ENCODE measurements at regions of chr20 and their contacts with region 1.

Region 1: GRCh38 chr20:49610701-49611538 is 43.0 kb upstream of the PTGIS start:
- DNase-seq: peak; percentile 62 to 94 (median 86)
- ATAC-seq: peak; percentile 80 to 93 (median 88)
- H3K4me3 ChIP-seq: peak overlapping the region in 1 of 4 donors; percentile 21
- H3K27ac ChIP-seq: peak overlapping the region in 3 of 4 donors; percentile 8 to 41 (median 30)
- H3K4me1 ChIP-seq: peaks cover 0 to 7% (median 0%) of the 10 kb centered on the region in 3 donors
- H3K27me3 ChIP-seq: no peaks in the 10 kb centered on the region
- CTCF ChIP-seq: peak; percentile 98 to 99 (median 98)

Region 2: GRCh38 chr20:49338061-49338460 is 272.9 kb before region 1 on chr20:
- intact Hi-C with region 1: loop called in 1 of 3 experiments (anchors 10 kb)
- DNase-seq: no peak
- ATAC-seq: no peak
- H3K4me3 ChIP-seq: no peak overlapping the region
- H3K27ac ChIP-seq: no peak overlapping the region
- H3K4me1 ChIP-seq: no peaks in the 10 kb centered on the region
- H3K27me3 ChIP-seq: peaks cover 0 to 3% (median 0%) of the 10 kb centered on the region in 4 donors
- CTCF ChIP-seq: no peak

Region 3: DNA sequence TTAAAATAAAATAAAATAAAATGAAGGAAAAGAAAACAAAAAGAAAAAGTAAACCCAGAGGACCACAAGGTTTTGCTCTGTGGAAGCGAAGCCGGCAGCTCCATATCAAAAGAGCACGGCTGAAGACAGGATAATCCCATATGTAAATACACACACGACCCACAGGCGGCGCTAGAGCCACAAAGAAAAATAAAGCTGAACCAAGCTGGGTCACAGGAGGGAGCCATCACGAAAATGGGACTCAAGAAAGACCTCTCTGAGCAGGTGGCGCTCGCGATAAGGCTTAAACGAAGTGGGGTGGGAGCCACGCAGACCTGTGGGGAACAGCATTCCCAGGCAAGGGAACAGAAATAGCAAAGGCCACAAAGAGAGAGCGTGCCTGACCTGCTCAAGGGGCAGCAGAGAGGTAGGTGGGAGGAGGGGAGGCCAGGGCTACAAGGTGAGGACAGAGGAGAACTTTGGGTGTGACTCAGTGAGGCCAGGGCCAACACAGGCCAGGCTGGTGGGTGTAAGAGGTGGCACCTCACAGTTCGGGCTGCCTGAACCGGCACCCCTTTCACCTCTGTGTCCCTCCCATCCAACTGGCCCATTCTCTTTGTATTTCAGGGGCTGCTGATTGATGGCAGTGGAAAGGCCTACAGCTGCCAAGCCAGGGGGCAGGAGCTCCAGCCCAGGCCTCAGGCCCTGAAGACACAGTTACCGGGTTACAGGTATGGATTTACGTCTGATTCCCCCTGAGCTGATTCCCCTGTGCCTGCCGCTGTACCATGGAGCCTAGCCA is 69.0 kb before region 1 on chr20:
- intact Hi-C with region 1: loop called in 2 of 3 experiments (anchors 2 to 5 kb)
- DNase-seq: peak in 5 of 6 donors; percentile 22 to 69 (median 52)
- ATAC-seq: peak; percentile 46 to 87 (median 78)
- H3K4me3 ChIP-seq: no peak overlapping the region
- H3K27ac ChIP-seq: no peak overlapping the region
- H3K4me1 ChIP-seq: no peaks in the 10 kb centered on the region
- H3K27me3 ChIP-seq: no peaks in the 10 kb centered on the region
- CTCF ChIP-seq: peak; percentile 43 to 61 (median 53)

Region 4: DNA sequence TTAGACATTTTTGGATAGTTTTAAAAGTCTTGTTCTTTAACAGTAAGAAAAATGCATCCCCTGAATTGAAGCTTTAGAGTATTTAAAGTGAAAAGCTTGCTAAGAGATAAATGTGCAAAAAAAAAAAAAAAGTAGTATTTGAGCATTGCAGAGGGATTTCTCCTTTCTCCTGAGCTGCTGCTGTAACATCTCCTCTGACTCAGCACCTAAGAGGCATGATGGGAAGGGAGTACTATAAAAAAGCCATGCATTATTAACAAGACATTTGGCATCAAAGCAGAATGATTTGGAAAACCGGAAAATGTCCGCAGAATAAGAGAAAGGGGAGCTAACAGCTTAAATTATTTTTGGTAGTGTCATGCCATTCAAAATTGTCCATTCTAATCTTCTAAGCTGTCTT is 74.9 kb after region 1 on chr20:
- intact Hi-C with region 1: no loop called
- DNase-seq: no peak
- ATAC-seq: peak in 2 of 4 donors; percentile 24 to 43
- H3K4me3 ChIP-seq: no peak overlapping the region
- H3K27ac ChIP-seq: peak overlapping the region in 1 of 4 donors; percentile 1
- H3K4me1 ChIP-seq: peaks cover 28 to 73% (median 31%) of the 10 kb centered on the region in 3 donors
- H3K27me3 ChIP-seq: no peaks in the 10 kb centered on the region
- CTCF ChIP-seq: no peak

Region 5: GRCh38 chr20:49843770-49844380 is 233.0 kb after region 1 on chr20:
- intact Hi-C with region 1: loop called in 2 of 3 experiments (anchors 5 kb)
- DNase-seq: no peak
- ATAC-seq: no peak
- H3K4me3 ChIP-seq: no peak overlapping the region
- H3K27ac ChIP-seq: no peak overlapping the region
- H3K4me1 ChIP-seq: peaks cover 0 to 9% (median 0%) of the 10 kb centered on the region in 3 donors
- H3K27me3 ChIP-seq: no peaks in the 10 kb centered on the region
- CTCF ChIP-seq: no peak